Activated CD4-positive, alpha-beta T cell treated with anti-CD3 and anti-CD28 coated beads, Interleukin-2, amount 10 ng/mL, durations not matched to agents 24 days and 14 days (primary cell): ENCODE measurements at regions of chr6 and their contacts with region 1.

Region 1: DNA sequence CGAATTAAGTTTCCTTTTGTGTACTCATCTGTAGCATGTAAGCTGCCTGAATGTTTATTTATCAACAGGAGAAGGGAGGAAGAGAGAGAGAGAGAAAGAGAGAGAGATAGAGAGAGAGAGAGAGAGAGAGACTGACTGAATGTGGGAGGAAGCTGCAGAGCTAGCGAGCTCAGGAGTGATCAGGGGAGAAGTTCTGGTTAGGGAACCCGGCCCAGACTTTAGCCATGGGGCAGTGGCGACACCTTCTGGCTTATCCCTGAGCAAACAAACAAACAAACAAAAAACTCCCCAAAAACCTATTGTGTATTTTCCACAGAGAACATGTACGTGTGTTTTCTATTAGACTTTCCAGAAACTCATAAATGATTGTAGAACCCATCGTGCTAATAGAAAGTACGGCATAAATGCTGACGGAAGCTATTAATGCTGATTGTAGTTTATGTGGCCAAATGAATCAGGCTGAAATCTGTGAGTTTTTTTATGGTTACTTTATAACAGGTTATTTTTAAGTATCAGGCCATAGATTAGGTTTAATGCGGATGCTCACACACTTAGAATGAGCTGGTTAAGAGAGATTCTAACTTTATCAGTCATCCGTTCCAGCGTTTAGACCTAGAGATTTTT is 92.8 kb downstream of the CLIC5 start:
- DNase-seq: peak; percentile 90
- H3K4me3 Mint-ChIP-seq: peak overlapping the region; percentile 10
- H3K27ac Mint-ChIP-seq: peak overlapping the region; percentile 89
- H3K4me1 Mint-ChIP-seq: peaks cover 46% of the 10 kb centered on the region
- H3K27me3 Mint-ChIP-seq: no peaks in the 10 kb centered on the region

Region 2: GRCh38 chr6:44593539-44593944 is 1329.3 kb before region 1 on chr6:
- intact Hi-C with region 1: loop called (anchors 1 kb)
- DNase-seq: peak; percentile 85
- H3K4me3 Mint-ChIP-seq: no peak overlapping the region
- H3K27ac Mint-ChIP-seq: no peak overlapping the region
- H3K4me1 Mint-ChIP-seq: no peaks in the 10 kb centered on the region
- H3K27me3 Mint-ChIP-seq: peaks cover 13% of the 10 kb centered on the region

Region 3: GRCh38 chr6:45001663-45002062 is 921.2 kb before region 1 on chr6:
- intact Hi-C with region 1: loop called (anchors 10 kb)
- DNase-seq: peak; percentile 78
- H3K4me3 Mint-ChIP-seq: peak overlapping the region; percentile 39
- H3K27ac Mint-ChIP-seq: peak overlapping the region; percentile 84
- H3K4me1 Mint-ChIP-seq: peaks cover 29% of the 10 kb centered on the region
- H3K27me3 Mint-ChIP-seq: no peaks in the 10 kb centered on the region

Region 4: DNA sequence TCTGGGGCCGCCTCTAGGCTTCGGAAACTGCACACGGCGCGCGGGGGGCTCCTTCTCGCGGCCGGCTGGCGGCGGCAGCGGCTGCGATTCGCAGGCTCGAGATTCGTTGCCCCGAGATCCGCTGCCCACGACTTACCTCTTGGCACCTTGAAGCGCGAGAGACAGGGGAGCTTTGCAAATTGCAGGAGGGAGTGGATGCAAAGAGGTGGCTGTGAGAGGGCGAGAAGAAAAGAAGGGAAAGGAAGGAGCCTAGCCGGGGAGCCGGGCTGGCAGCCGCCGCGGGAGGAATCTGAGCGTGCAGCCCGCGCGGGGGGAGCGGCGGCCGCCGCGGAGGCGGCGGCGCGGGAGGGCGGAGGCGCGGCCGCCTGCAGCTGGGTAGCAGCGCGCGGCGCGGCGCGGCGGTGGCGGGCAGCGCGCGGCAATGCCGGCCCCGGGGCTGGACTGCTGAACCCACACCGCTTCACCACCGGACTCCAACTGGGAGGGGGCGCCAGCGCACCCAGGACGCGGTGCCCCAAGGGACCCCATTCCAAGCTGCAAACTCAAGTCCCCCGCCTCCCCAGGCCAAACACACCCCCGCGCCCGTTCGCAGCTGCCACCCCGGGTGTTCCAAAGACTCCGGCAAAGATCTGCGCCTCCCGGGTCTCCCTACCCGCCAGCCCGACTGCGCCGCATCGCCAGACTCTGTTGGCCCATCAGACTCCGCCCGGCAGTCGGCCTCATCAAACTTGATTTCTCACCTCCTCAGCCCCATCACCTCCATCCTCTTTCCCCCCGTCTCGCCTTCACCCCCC is 500.9 kb before region 1 on chr6:
- intact Hi-C with region 1: loop called (anchors 1 kb)
- DNase-seq: peak; percentile 84
- H3K4me3 Mint-ChIP-seq: peak overlapping the region; percentile 94
- H3K27ac Mint-ChIP-seq: peak overlapping the region; percentile 98
- H3K4me1 Mint-ChIP-seq: peaks cover 44% of the 10 kb centered on the region
- H3K27me3 Mint-ChIP-seq: peaks cover 18% of the 10 kb centered on the region

Region 5: DNA sequence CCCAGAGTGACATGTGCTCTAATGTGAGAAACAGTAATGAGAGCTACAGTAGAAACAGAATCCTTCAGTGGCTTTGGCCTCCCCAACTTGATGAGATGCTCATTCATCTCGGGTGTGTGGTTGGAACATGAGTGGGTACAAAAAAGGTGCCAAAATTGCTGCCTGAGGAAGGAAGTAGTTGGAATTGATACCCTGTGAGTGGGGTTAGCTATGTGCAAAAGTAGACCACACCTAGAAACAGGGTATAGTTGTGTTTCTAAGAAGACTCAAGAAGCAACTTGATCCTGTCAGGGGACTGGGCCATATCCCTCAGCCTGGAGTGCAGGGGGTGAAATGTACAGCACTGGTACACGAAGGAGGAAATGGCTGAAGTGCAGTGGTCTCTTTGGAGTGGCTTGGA is 338.7 kb before region 1 on chr6:
- intact Hi-C with region 1: loop called (anchors 1 kb)
- DNase-seq: peak; percentile 64
- H3K4me3 Mint-ChIP-seq: no peak overlapping the region
- H3K27ac Mint-ChIP-seq: peak overlapping the region; percentile 88
- H3K4me1 Mint-ChIP-seq: peaks cover 42% of the 10 kb centered on the region
- H3K27me3 Mint-ChIP-seq: no peaks in the 10 kb centered on the region

Region 6: GRCh38 chr6:45801471-45802289 is 121.2 kb before region 1 on chr6:
- intact Hi-C with region 1: loop called (anchors 1 kb)
- DNase-seq: peak; percentile 78
- H3K4me3 Mint-ChIP-seq: peak overlapping the region; percentile 28
- H3K27ac Mint-ChIP-seq: peak overlapping the region; percentile 86
- H3K4me1 Mint-ChIP-seq: peaks cover 21% of the 10 kb centered on the region
- H3K27me3 Mint-ChIP-seq: no peaks in the 10 kb centered on the region

Region 7: GRCh38 chr6:46011241-46012085 is 88.6 kb after region 1 on chr6:
- intact Hi-C with region 1: loop called (anchors 1 kb)
- DNase-seq: peak; percentile 91
- H3K4me3 Mint-ChIP-seq: peak overlapping the region; percentile 64
- H3K27ac Mint-ChIP-seq: peak overlapping the region; percentile 79
- H3K4me1 Mint-ChIP-seq: peaks cover 52% of the 10 kb centered on the region
- H3K27me3 Mint-ChIP-seq: peaks cover 9% of the 10 kb centered on the region